ENCODE measurements at regions of chr22 and their contacts with region 1.

Region 1: GRCh38 chr22:32265882-32266767 is 11.0 kb upstream of the SLC5A4 start:
- DNase-seq: peak in 1 of 2 donors; percentile 77
- ATAC-seq: peak; percentile 66
- H3K4me3 ChIP-seq: no peak overlapping the region
- H3K27ac ChIP-seq: no peak overlapping the region
- H3K4me1 ChIP-seq: no peaks in the 10 kb centered on the region
- H3K27me3 ChIP-seq: no peaks in the 10 kb centered on the region

Region 2: GRCh38 chr22:31977141-31977841 is 288.8 kb before region 1 on chr22:
- intact Hi-C with region 1: loop called (anchors 2 to 5 kb)
- DNase-seq: peak; percentile 78 to 90
- ATAC-seq: peak; percentile 78
- H3K4me3 ChIP-seq: no peak overlapping the region
- H3K27ac ChIP-seq: no peak overlapping the region
- H3K4me1 ChIP-seq: no peaks in the 10 kb centered on the region
- H3K27me3 ChIP-seq: no peaks in the 10 kb centered on the region

Region 3: DNA sequence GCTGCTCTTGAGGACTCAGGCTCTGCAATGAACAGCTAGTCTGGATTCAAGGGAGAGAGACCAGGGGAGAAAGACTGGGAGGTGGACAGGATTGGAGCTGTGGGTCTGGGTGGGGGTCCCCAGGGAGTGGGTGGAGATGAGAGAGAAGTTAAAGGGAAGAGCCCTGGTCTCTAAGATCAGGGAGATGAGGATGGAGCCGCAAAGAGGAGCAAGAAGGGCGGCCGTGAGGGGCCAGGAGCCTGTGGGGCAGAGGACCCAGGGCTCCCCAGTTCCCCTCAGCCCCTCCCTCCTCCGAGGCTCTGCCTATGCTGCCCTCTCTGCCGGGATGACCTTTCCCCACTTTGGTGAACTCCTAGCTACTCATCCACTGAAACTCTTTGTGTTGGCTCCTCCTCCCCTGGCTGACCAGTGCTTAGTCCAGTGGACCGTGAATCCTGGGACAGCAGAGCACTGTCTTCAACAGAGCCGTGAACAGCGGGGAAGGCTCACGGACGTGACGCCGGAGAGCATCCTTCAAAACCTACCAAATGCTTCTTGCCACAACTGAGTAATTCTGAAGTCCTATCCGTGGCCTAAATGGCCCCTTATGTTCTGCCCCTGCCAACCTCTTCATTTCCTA is 75.1 kb after region 1 on chr22:
- intact Hi-C with region 1: no loop called
- DNase-seq: no peak
- ATAC-seq: no peak
- H3K4me3 ChIP-seq: no peak overlapping the region
- H3K27ac ChIP-seq: no peak overlapping the region
- H3K4me1 ChIP-seq: no peaks in the 10 kb centered on the region
- H3K27me3 ChIP-seq: no peaks in the 10 kb centered on the region